ENCODE measurements at regions of chr3 and their contacts with region 1.

Region 1: DNA sequence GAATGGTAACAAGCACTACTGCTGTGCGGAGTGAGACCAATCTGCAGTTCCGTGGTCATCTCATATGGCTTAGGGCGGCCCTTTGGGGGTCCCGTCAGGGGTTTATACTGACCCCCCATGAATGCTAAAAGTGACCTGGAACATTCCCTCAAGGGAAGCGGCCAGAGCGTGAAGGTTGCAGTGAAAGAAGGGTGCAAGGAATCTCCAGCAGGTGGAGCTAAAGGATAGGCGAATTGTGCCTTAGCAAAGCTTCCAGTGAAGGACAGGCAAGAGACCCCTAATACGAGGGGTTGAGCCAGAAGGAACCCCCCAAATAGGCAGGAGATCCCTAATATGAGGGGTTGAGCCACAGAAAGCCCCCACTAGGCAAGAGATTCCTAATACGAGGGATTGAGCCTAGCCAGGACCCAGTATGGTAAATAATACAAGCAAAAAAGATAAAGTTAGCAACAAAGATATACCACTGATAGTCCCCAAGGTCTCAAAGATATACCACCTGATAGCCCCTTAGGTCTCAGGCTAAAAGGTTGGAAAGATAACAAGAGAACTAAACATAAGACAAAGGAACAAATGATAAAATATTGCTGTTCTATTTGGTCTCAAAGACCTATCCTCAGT is 32.8 kb downstream of the ZNF589 start:
- DNase-seq: peak; percentile 30
- ATAC-seq: peak; percentile 91
- H3K4me3 ChIP-seq: no peak overlapping the region
- H3K27ac ChIP-seq: no peak overlapping the region
- H3K4me1 ChIP-seq: no peaks in the 10 kb centered on the region
- H3K27me3 ChIP-seq: no peaks in the 10 kb centered on the region
- CTCF ChIP-seq: peak; percentile 73 to 85 (median 76)
- EP300 ChIP-seq: no peak
- POLR2A ChIP-seq: no peak
- RAD21 ChIP-seq: peak; percentile 84

Region 2: GRCh38 chr3:48432411-48433372 is 159.0 kb after region 1 on chr3:
- CTCF ChIA-PET with region 1: interaction called, 157 read pairs
- POLR2A ChIA-PET with region 1: interaction called, 3 read pairs
- RAD21 ChIA-PET with region 1: interaction called, 73 read pairs
- SMC1A ChIA-PET with region 1: interaction called, 65 read pairs
- in situ Hi-C with region 1: loop called (anchors 5 kb)
- intact Hi-C with region 1: loop called (anchors 1 kb)
- DNase-seq: no peak
- ATAC-seq: peak; percentile 2; the same call in 1 of the 3 replicates
- H3K4me3 ChIP-seq: no peak overlapping the region
- H3K27ac ChIP-seq: peak overlapping the region; percentile 54
- H3K4me1 ChIP-seq: peaks cover 19% of the 10 kb centered on the region
- H3K27me3 ChIP-seq: no peaks in the 10 kb centered on the region
- CTCF ChIP-seq: peak in 2 of 3 experiments; percentile 18; a peak in 3 of 6 replicates
- EP300 ChIP-seq: no peak
- POLR2A ChIP-seq: no peak
- RAD21 ChIP-seq: no peak

Region 3: GRCh38 chr3:48565591-48566400 is 292.1 kb after region 1 on chr3:
- CTCF ChIA-PET with region 1: no interaction called
- POLR2A ChIA-PET with region 1: no interaction called
- RAD21 ChIA-PET with region 1: no interaction called
- SMC1A ChIA-PET with region 1: no interaction called
- in situ Hi-C with region 1: no loop called
- intact Hi-C with region 1: no loop called
- DNase-seq: no peak
- ATAC-seq: no peak; the same call in 1 of the 3 replicates
- H3K4me3 ChIP-seq: no peak overlapping the region
- H3K27ac ChIP-seq: no peak overlapping the region
- H3K4me1 ChIP-seq: peaks cover 6% of the 10 kb centered on the region
- H3K27me3 ChIP-seq: no peaks in the 10 kb centered on the region
- CTCF ChIP-seq: no peak
- EP300 ChIP-seq: no peak
- POLR2A ChIP-seq: no peak
- RAD21 ChIP-seq: no peak

Measured in GM12878 (cell line).